Activated CD4-positive, alpha-beta T cell treated with anti-CD3 and anti-CD28 coated beads for 36 hours (primary cell): ENCODE measurements at regions of chr6 and their contacts with region 1.

Region 1: DNA sequence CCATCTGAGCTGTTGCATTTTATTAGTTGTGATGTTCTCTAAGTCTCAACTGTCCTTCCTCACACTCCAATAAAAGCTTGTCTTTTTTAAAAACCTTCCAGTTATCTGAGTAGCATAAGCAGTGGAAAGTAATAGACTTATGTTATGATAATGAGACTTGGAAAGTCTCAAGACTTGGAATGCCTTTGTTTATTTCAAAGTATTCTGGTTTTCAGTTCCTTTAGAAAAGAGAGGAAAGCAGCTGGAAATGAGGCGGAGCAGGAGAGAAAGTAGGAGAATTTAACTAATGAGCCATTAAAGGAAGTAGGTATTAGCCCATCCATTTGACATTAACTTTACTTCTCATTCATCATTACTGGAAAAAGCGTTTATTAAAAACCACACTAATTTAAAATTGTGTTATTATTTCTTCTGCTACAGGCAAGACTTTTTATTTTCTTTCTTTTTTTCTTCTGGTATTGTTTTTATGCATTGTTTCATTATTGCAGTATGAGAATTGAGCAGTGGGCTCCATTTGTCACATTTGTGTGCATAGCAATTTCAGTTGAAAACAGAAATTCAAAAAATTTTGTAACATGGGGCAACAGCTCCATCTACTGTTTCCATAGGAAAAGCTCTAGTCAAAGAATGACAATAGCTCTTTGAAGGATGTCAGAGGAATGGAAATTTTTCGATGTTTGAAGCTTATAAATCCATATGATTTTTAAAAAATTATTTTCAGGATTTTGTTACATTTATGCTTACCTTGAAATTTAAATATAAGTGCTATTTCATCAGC is 194.8 kb downstream of the COL9A1 start:
- DNase-seq: no peak
- ATAC-seq: no peak
- H3K4me3 Mint-ChIP-seq: no peak overlapping the region
- H3K27ac Mint-ChIP-seq: no peak overlapping the region
- H3K4me1 Mint-ChIP-seq: no peaks in the 10 kb centered on the region
- H3K27me3 Mint-ChIP-seq: peaks cover 8% of the 10 kb centered on the region

Region 2: DNA sequence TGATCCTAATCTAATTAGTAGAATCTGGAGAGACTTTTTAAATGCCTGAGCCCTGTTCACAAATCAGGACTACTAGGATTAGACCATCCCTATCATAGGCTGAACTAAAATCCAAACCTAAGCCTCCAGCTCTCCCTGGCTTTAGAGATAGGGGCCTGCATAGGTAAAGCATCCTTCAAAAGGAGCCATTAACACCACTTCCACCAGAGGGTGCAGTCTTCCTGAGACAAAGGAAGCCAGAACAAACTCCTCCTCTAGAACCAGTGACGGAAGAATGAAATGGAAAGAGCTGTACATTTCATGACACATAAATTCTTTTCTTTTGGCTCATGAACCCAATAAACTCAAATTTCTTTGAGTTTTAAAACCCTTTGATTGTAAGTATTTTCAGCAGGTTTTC is 1764.1 kb before region 1 on chr6:
- CTCF ChIA-PET with region 1: no interaction called
- POLR2A ChIA-PET with region 1: no interaction called
- intact Hi-C with region 1: loop called in 1 of 2 experiments (anchors 10 kb)
- DNase-seq: peak; percentile 24
- ATAC-seq: no peak
- H3K4me3 Mint-ChIP-seq: no peak overlapping the region
- H3K27ac Mint-ChIP-seq: no peak overlapping the region
- H3K4me1 Mint-ChIP-seq: no peaks in the 10 kb centered on the region
- H3K27me3 Mint-ChIP-seq: no peaks in the 10 kb centered on the region

Region 3: DNA sequence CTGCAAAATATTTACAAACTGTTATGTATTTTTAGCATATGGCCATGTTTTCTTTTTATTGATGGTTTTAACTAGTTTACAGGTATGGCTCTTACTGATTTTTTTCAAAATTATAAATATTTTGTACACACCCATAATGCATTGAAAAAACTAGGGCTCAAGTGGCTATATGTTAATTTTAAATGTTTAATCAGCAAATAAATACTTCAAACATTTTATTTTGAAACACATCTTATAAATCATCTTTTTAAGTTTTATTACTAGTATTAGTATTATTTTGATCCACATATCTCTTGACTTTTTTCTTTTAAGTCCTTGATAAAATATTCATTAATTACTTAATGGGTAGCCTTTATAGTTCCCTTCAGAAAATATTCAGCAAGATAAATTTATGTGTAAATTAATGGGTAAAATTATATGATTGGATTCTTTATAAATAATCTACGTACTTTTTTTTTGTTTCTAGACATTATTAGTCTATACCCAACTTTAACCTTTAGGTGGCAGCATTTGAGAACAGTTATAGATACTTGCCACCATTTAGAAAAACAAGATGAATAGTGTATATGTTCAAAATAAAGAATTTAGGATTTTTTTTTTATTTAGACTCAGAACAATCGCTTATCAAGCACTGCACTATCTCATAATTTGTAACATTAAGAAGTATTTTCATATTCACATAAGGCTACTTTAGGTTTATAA is 1231.1 kb before region 1 on chr6:
- CTCF ChIA-PET with region 1: no interaction called
- POLR2A ChIA-PET with region 1: no interaction called
- intact Hi-C with region 1: loop called in 1 of 2 experiments (anchors 1 kb)
- DNase-seq: no peak
- ATAC-seq: no peak
- H3K4me3 Mint-ChIP-seq: no peak overlapping the region
- H3K27ac Mint-ChIP-seq: no peak overlapping the region
- H3K4me1 Mint-ChIP-seq: no peaks in the 10 kb centered on the region
- H3K27me3 Mint-ChIP-seq: no peaks in the 10 kb centered on the region

Region 4: DNA sequence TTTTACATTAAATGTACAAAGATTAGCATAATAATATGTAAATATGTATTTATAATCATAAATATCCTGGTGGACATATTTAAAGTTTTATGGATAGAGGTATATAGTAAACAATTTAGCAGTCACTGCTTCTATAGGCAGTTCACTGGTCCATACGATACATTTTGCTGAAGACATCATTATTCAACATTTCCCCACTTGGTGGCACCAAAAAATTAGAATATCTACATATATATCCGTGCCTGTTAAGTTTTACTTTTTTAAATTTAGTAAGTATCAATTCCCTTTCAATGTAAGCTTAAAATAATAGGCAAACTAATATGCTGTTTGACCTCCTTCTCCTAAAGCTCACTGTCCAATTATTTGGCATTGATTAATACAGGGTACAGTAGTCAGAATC is 375.4 kb before region 1 on chr6:
- CTCF ChIA-PET with region 1: interaction called, 7 read pairs
- POLR2A ChIA-PET with region 1: no interaction called
- intact Hi-C with region 1: loop called (anchors 2 to 5 kb)
- DNase-seq: no peak
- ATAC-seq: no peak
- H3K4me3 Mint-ChIP-seq: no peak overlapping the region
- H3K27ac Mint-ChIP-seq: no peak overlapping the region
- H3K4me1 Mint-ChIP-seq: no peaks in the 10 kb centered on the region
- H3K27me3 Mint-ChIP-seq: no peaks in the 10 kb centered on the region

Region 5: DNA sequence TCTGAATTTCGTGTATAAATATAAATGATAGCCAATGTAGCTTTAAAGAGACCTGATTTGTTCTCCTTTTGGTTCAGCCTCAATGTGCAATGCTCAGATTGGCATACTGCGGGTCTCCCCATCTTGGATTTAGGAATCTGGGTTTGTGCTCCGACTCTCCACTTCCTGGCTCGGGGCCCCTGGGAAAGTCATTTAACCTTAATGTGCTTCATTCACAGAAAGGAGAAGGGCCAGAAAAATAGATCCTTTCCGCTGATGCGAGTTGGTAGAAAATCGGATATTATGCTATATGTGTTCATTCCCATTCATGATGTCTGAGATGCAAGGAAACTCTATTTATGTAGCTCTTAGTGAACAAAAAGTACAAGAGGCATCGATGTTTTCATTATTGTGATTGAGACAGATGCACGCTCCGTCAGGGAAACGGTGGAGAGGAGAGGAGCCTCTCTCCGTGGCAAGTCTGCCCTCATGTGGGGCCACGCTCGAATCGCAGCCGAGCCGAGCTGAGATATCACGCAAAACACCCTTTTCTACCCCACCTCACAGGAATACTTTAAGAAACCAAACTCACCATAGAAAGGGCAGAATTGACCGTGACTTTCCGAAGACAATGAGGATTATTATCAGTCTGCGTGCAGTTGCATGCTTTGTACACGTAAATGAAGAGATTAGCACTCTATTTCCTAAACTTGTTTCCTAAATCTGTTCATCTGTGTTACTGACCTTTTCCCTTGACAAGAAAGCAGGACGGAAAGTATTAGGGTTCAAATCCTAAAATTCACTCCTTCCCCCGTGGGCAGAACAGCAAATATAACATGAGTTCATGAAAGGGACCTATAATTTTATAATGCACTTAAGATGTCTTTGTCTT is 58.3 kb after region 1 on chr6:
- CTCF ChIA-PET with region 1: interaction called, 3 read pairs
- POLR2A ChIA-PET with region 1: no interaction called
- intact Hi-C with region 1: loop called in 1 of 2 experiments (anchors 5 kb)
- DNase-seq: peak; percentile 67
- ATAC-seq: peak; percentile 55
- H3K4me3 Mint-ChIP-seq: no peak overlapping the region
- H3K27ac Mint-ChIP-seq: no peak overlapping the region
- H3K4me1 Mint-ChIP-seq: peaks cover 3% of the 10 kb centered on the region
- H3K27me3 Mint-ChIP-seq: peaks cover 25% of the 10 kb centered on the region